Mammary epithelial cell (primary cell): ENCODE measurements at regions of chr2 and their contacts with region 1.

Region 1: DNA sequence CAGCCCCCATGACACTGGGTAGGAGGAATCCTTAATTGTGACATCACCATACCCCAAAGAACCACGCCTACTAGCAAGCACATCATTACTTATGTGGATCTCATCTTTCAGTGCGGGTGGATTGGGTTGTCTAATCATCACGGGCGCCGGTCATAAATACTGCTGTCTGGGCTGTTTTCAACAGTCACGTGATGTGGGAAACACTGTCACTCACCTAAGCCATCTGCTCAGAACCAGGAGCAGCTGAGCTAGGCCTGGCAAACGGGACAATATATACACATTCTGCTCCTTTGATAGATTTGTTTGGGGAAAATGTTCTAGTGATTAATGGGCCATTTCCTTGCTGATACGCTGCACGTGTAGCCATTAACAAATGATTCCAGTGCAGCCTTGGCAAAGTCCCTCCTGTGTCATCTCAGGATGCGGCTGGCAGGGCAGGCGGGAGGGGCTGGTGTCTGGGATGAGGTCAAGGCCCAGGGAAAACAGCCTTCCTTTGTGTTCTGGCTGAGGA is 145.9 kb upstream of the COPS8 start:
- DNase-seq: no peak
- H3K4me3 ChIP-seq: no peak overlapping the region
- H3K27ac ChIP-seq: no peak overlapping the region
- H3K4me1 ChIP-seq: no peaks in the 10 kb centered on the region
- H3K27me3 ChIP-seq: no peaks in the 10 kb centered on the region
- CTCF ChIP-seq: no peak

Region 2: DNA sequence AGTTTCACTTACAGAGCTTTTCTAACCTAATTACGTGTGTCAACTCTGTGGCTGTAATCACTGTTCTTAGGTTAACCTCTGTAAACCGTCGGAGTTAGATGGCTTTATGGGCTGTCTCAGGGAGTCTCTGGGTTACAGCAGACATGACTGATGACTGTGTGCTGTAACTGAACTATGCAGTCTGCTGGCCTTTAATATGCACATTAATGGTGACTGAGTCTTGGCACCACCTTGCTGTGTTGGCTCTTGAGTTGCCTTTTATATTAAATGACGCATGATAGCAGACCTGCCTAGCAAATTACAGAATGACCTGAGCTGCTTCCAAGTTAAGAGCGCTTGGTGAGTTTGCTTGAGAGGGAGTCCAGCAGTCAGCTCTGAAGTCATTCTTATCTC is 280.0 kb before region 1 on chr2:
- CTCF ChIA-PET with region 1: no interaction called
- dilution Hi-C with region 1: no loop called
- in situ Hi-C with region 1: no loop called
- intact Hi-C with region 1: no loop called
- DNase-seq: no peak
- H3K4me3 ChIP-seq: no peak overlapping the region
- H3K27ac ChIP-seq: no peak overlapping the region
- H3K4me1 ChIP-seq: peaks cover 41% of the 10 kb centered on the region
- H3K27me3 ChIP-seq: no peaks in the 10 kb centered on the region
- CTCF ChIP-seq: no peak

Region 3: DNA sequence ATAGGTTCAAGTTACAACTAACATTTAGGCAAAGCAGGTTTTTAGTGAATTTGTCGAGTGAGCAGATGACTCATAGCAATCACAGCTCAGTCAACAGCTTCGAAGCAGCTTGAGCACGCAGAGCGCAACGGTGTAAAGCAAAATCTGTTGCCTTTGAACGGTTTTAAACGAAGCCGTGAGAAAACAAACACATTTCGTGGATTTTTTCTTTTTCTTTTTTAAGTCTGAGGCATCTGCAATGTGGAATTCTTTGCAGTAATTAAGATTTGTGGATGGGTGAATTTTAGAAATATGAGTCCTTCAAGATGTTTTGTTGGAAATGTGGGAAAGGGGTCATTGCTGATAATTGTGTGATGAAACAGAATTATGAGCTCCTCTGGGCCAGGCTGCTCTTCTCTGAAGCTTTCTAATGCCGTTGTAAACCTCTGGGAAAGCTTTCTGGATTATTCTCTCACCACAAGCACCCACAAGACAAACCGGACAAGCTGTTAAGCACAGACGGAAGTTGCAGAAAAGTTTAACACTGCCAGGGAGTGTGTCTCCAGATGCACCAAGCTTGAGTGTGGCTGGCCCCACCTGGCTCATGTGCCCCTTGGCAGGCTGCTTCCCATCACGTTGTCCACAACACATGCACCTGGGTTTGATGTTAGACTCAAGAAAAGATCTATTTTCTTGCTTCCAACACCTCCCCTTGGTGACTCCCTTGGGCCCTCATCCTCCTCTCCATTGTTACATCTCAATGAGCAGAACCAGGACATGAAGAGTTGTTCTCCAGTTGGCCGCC is 145.4 kb before region 1 on chr2:
- CTCF ChIA-PET with region 1: no interaction called
- dilution Hi-C with region 1: no loop called
- in situ Hi-C with region 1: no loop called
- intact Hi-C with region 1: no loop called
- DNase-seq: no peak
- H3K4me3 ChIP-seq: no peak overlapping the region
- H3K27ac ChIP-seq: no peak overlapping the region
- H3K4me1 ChIP-seq: no peaks in the 10 kb centered on the region
- H3K27me3 ChIP-seq: no peaks in the 10 kb centered on the region
- CTCF ChIP-seq: no peak

Region 4: GRCh38 chr2:236984046-236984445 is 44.3 kb after region 1 on chr2:
- CTCF ChIA-PET with region 1: no interaction called
- dilution Hi-C with region 1: loop called (anchors 5 kb)
- in situ Hi-C with region 1: no loop called
- intact Hi-C with region 1: no loop called
- DNase-seq: no peak
- H3K4me3 ChIP-seq: no peak overlapping the region
- H3K27ac ChIP-seq: no peak overlapping the region
- H3K4me1 ChIP-seq: no peaks in the 10 kb centered on the region
- H3K27me3 ChIP-seq: no peaks in the 10 kb centered on the region
- CTCF ChIP-seq: no peak

Region 5: DNA sequence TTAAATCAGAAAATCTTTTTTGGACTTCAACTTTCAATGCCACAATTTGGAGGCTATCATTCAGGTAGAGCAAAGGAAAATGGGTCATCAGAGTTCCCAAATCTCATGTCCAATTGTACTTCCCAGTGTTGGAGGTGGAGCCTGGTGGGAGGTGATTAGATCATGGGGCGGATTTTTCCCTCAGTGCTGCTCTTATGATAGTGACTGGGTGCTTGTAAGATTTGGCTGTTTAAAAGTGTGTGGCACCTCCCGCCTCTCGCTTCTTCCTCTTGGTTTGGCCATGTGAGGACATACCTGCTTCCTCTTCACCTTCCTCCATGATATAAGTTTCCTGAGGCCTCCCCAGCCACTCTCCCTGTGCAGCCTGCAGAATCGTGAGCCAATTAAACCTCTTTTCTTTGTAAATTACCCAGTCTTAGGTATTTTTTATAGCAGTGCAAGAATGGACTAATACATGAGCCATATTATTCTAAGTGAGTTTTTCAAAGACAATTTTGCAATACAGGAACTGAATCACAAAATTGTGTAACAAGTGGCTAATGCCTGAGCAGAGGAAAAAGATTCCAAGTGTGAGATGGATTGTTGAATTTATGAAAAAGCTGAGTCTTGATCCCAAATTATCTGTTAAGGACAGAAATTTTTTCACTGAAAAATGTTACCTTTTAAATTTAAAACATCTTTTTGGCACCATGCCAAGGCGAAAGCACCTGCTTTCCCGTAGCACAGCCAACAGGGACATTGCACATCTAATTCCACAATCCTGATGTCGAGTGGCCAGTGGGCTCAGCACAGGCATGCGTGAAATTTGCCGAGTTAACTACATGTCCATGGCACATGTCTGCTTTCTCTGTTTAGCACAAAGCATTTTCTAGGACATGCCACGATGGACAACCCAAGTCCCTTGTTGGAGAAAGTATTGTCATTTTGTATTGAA is 323.3 kb after region 1 on chr2:
- CTCF ChIA-PET with region 1: no interaction called
- dilution Hi-C with region 1: no loop called
- in situ Hi-C with region 1: no loop called
- intact Hi-C with region 1: no loop called
- DNase-seq: peak; percentile 81
- H3K4me3 ChIP-seq: no peak overlapping the region
- H3K27ac ChIP-seq: no peak overlapping the region
- H3K4me1 ChIP-seq: peaks cover 13% of the 10 kb centered on the region
- H3K27me3 ChIP-seq: no peaks in the 10 kb centered on the region
- CTCF ChIP-seq: no peak